ENCODE measurements at regions of chr2 and their contacts with region 1.

Region 1: DNA sequence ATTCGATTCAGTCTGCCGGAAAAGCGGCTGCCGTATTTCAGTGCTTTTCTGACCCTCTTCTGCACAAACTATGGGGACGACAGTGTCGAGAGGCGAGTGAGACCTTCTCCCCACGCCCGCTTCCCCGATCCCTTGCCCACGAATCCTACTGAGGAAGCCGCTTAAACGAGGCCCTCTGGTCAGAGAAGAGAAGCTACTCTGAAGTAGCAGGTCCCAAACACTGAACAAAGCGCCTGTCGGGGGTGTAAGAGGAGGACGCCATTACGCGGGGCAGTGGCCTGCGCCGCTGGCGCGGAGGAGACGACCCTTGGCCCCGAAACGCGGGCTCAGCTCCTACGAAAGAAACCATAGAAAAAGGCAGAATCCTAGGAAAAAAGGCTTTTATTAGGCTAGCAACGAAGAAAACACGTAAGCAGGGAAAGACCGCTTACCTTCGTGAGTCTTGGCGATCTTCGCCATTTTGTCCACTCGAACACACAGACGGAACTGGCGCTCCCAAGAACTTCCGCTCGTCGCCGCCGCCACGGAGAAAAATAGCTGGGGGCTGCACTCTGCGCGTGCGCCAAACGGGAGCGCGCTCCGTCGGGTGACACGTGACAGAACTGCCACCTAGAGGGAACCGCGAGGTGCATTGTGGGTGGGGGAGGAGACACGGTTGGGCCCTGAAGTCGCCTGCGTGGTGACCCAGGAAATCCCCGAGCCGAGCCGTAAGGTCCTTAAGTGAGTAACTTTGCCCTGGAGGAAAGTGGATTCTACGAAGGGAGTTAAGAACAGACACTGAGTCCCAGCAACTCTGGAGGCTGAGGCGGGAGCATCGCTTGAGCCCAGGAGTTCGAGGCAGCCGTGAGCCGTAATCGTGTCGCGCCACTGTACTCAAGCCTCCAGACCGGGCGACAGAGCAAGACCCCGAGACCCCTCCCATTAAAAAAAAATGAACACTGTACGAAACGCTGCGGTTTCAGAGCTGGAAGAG is at the start of gene SF3B1:
- DNase-seq: peak; percentile 91
- ATAC-seq: peak; percentile 96
- H3K4me3 ChIP-seq: peak within 1 kb of the TSS; percentile 85 to 99
- H3K27ac ChIP-seq: peak within 1 kb of the TSS; percentile 99
- H3K4me1 ChIP-seq: peaks cover 32% of the 10 kb centered on the region; the same call in 1 of the 2 replicates
- H3K27me3 ChIP-seq: no peaks in the 10 kb centered on the region
- CTCF ChIP-seq: no peak
- total RNA-seq, gene SF3B1: 275 TPM

Region 2: DNA sequence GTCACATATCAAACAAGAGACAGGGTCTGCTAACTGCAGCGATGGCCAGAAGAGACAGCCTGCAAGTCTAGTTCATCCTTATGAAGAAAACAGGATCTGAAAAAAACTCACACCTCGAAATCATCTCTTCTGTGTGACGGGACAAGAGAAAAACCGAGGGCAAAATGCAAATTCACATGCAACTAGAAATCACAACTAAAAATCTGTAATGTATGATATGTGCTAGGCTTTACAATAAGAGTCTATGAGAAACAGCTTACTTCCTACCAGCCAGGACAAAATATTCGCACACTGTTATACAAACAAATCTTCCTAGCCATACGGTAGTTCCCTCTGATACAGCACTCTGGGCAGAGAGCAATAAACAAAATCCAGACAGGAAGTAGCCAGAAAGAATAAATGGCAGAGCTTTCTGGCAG is 173.0 kb before region 1 on chr2:
- CTCF ChIA-PET with region 1: no interaction called
- POLR2A ChIA-PET with region 1: interaction called, 16 read pairs
- in situ Hi-C with region 1: no loop called
- intact Hi-C with region 1: no loop called
- DNase-seq: no peak
- ATAC-seq: no peak
- H3K4me3 ChIP-seq: no peak overlapping the region
- H3K27ac ChIP-seq: no peak overlapping the region
- H3K4me1 ChIP-seq: no peaks in the 10 kb centered on the region
- H3K27me3 ChIP-seq: no peaks in the 10 kb centered on the region
- CTCF ChIP-seq: no peak

Region 3: DNA sequence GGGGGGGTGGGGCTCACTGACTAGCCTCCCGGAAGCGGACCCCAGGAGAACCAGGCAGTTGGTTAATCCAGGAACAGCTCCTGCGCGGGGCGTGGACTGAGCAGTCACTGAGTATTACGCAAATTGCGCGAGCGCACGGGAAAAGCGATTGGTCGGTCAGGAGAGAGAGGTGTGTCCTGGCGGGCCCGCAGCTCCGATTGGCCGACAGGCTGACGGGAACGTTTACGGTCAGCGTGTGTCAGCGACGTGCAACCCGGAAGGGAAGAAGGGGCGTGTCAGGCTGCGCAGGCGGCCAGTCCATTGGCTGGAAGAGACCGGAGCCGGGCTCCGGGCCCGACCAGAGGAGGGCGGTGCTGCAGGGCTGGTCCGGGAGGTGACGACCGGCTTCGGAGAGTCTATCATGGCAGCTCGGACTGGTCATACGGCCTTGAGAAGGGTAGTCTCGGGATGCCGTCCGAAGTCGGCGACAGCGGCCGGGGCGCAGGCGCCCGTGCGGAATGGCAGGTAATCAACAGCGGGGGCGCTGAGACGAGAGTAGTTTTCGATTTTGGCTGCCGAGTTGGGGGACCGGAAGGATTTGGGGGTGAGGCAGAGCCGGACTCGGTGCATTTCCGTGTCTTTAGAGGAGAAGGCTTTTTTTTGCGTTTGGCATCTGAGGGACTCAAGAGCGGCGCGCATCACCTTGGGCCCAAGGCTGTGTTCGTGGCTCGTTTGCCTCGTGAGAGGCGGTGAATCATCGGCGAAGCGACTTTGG is 18.5 kb after region 1 on chr2 and contains the start of gene COQ10B:
- CTCF ChIA-PET with region 1: no interaction called
- POLR2A ChIA-PET with region 1: interaction called, 15 read pairs
- in situ Hi-C with region 1: no loop called
- intact Hi-C with region 1: loop called (anchors 1 kb)
- DNase-seq: peak; percentile 97
- ATAC-seq: peak; percentile 97
- H3K4me3 ChIP-seq: peak within 1 kb of the TSS; percentile 77 to 85
- H3K27ac ChIP-seq: peak within 1 kb of the TSS; percentile 96
- H3K4me1 ChIP-seq: peaks cover 6% of the 10 kb centered on the region
- H3K27me3 ChIP-seq: no peaks in the 10 kb centered on the region
- CTCF ChIP-seq: no peak
- total RNA-seq, gene COQ10B: 34.7 TPM

Measured in Panc1 (cell line).